ENCODE measurements at regions of chr15 and their contacts with region 1.

Region 1: DNA sequence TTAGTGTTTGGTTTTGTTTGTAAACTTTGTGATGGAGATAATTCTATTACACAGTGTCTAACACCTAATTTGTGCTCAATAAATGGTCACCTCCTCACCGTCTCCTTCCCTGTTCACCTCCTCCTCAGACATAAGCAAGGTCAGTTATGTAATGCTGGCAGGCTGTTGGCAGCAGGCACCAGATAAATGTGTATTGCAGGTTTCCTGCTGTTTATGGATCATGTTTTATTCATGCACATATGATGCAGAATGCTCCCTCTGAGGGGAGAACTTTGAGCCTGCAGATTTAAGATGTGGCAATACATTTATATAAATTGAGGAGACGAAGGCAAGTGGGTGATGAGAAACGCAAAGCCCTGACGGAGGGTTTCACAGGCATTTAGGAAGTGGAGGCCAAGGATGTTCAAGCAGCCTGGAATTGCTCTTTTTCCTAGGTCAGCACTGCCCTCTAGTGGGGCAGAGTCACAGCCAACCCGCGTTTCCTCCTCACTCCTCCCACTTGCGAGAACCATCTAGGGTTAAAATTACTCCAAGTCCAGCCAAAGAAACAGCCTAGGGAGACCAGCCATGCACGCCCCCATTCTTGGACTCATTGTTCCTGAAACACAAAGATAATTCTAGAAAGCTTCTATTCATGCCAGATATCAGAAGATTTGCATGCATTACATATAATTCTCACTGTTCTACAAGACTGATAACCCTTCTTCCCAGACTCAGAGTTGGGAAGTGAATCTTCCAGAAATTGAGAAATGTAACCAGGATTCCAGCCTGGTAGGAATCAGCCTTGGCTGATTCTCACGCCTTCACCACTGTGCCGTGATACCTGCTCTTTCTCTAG is 228.7 kb downstream of the SLCO3A1 start:
- DNase-seq: peak in 1 of 2 donors; percentile 60
- H3K4me3 ChIP-seq: no peak overlapping the region
- H3K27ac ChIP-seq: no peak overlapping the region
- H3K4me1 ChIP-seq: no peaks in the 10 kb centered on the region
- H3K27me3 ChIP-seq: no peaks in the 10 kb centered on the region
- CTCF ChIP-seq: peak; percentile 29 to 70 (median 68)
- POLR2A ChIP-seq: no peak

Region 2: GRCh38 chr15:91291673-91292072 is 790.6 kb before region 1 on chr15:
- intact Hi-C with region 1: loop called (anchors 10 kb)
- DNase-seq: no peak
- H3K4me3 ChIP-seq: no peak overlapping the region
- H3K27ac ChIP-seq: no peak overlapping the region
- H3K4me1 ChIP-seq: no peaks in the 10 kb centered on the region
- H3K27me3 ChIP-seq: no peaks in the 10 kb centered on the region
- CTCF ChIP-seq: no peak
- POLR2A ChIP-seq: no peak

Region 3: GRCh38 chr15:93730724-93731123 is 1648.5 kb after region 1 on chr15:
- intact Hi-C with region 1: no loop called
- DNase-seq: no peak
- H3K4me3 ChIP-seq: no peak overlapping the region
- H3K27ac ChIP-seq: no peak overlapping the region
- H3K4me1 ChIP-seq: no peaks in the 10 kb centered on the region
- H3K27me3 ChIP-seq: no peaks in the 10 kb centered on the region
- CTCF ChIP-seq: no peak
- POLR2A ChIP-seq: no peak

Measured in breast epithelium (tissue), 4 donors.